CD14-positive monocyte (primary cell): ENCODE measurements at regions of chr5 and their contacts with region 1.

Region 1: DNA sequence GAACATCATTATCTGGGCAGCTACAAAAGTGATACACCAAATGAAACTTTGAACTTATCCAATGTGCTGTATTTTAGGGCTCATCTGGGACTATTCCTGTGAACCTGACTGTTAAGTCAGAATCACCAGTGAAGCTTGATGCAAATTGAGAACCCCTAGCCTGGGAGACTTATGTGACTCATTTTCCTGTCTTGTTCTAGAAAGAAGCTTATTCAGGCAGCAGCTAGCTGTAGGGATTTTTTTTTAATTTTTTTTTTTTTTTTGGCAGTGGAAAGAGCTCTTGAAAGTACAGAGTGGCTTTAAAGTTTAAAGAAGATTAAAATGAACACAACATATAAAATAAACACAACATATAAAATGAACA is 81.1 kb upstream of the TNFAIP8 start:
- DNase-seq: peak; percentile 59 to 90 (median 85)
- H3K4me3 ChIP-seq: peak overlapping the region in 1 of 3 experiments; percentile 53
- H3K4me3 Mint-ChIP-seq: peak overlapping the region in 1 of 2 donors; percentile 67
- H3K27ac ChIP-seq: peak overlapping the region; percentile 46 to 96
- H3K27ac Mint-ChIP-seq: peak overlapping the region; percentile 87 to 96 (median 94)
- H3K4me1 ChIP-seq: peaks cover 79 to 85% of the 10 kb centered on the region in 2 donors
- H3K4me1 Mint-ChIP-seq: peaks cover 89% of the 10 kb centered on the region
- H3K27me3 ChIP-seq: no peaks in the 10 kb centered on the region
- H3K27me3 Mint-ChIP-seq: no peaks in the 10 kb centered on the region
- CTCF ChIP-seq: no peak

Region 2: GRCh38 chr5:119309326-119309725 is 34.6 kb after region 1 on chr5:
- intact Hi-C with region 1: loop called in 1 of 2 experiments (anchors 5 kb)
- DNase-seq: no peak
- H3K4me3 ChIP-seq: peak overlapping the region in 1 of 3 experiments; percentile 54
- H3K4me3 Mint-ChIP-seq: peak overlapping the region in 1 of 2 donors; percentile 82
- H3K27ac ChIP-seq: peak overlapping the region; percentile 16 to 30
- H3K27ac Mint-ChIP-seq: peak overlapping the region; percentile 28 to 81 (median 70)
- H3K4me1 ChIP-seq: peaks cover 42 to 65% of the 10 kb centered on the region in 2 donors
- H3K4me1 Mint-ChIP-seq: peaks cover 75% of the 10 kb centered on the region
- H3K27me3 ChIP-seq: no peaks in the 10 kb centered on the region
- H3K27me3 Mint-ChIP-seq: peaks cover 0 to 3% (median under 1%) of the 10 kb centered on the region in 3 donors
- CTCF ChIP-seq: no peak

Region 3: GRCh38 chr5:119340597-119341218 is 66.0 kb after region 1 on chr5:
- intact Hi-C with region 1: loop called (anchors 5 kb)
- DNase-seq: peak; percentile 25 to 52 (median 47)
- H3K4me3 ChIP-seq: peak overlapping the region in 2 of 3 experiments; percentile 31 to 67
- H3K4me3 Mint-ChIP-seq: peak overlapping the region; percentile 69 to 85
- H3K27ac ChIP-seq: peak overlapping the region; percentile 52 to 88
- H3K27ac Mint-ChIP-seq: peak overlapping the region; percentile 79 to 97 (median 92)
- H3K4me1 ChIP-seq: peaks cover 96 to 99% of the 10 kb centered on the region in 2 donors
- H3K4me1 Mint-ChIP-seq: peaks cover 95% of the 10 kb centered on the region
- H3K27me3 ChIP-seq: no peaks in the 10 kb centered on the region
- H3K27me3 Mint-ChIP-seq: no peaks in the 10 kb centered on the region
- CTCF ChIP-seq: no peak

Region 4: GRCh38 chr5:119355685-119356611 is 81.2 kb after region 1 on chr5 and contains the start of gene TNFAIP8:
- intact Hi-C with region 1: loop called in 1 of 2 experiments (anchors 5 kb)
- DNase-seq: peak; percentile 62 to 89 (median 68)
- H3K4me3 ChIP-seq: peak within 1 kb of the TSS; percentile 90 to 98 (median 90)
- H3K4me3 Mint-ChIP-seq: peak within 1 kb of the TSS; percentile 99 to 100
- H3K27ac ChIP-seq: peak within 1 kb of the TSS; percentile 92 to 96
- H3K27ac Mint-ChIP-seq: peak within 1 kb of the TSS; percentile 94 to 99 (median 97)
- H3K4me1 ChIP-seq: peaks cover 63 to 68% of the 10 kb centered on the region in 2 donors
- H3K4me1 Mint-ChIP-seq: peaks cover 79% of the 10 kb centered on the region
- H3K27me3 ChIP-seq: no peaks in the 10 kb centered on the region
- H3K27me3 Mint-ChIP-seq: peaks cover 0 to 2% (median 0%) of the 10 kb centered on the region in 3 donors
- CTCF ChIP-seq: no peak
- polyA plus RNA-seq, gene TNFAIP8: 20.6 to 55.5 (median 47.0) TPM